ENCODE measurements at regions of chr4 and their contacts with region 1.

Region 1: DNA sequence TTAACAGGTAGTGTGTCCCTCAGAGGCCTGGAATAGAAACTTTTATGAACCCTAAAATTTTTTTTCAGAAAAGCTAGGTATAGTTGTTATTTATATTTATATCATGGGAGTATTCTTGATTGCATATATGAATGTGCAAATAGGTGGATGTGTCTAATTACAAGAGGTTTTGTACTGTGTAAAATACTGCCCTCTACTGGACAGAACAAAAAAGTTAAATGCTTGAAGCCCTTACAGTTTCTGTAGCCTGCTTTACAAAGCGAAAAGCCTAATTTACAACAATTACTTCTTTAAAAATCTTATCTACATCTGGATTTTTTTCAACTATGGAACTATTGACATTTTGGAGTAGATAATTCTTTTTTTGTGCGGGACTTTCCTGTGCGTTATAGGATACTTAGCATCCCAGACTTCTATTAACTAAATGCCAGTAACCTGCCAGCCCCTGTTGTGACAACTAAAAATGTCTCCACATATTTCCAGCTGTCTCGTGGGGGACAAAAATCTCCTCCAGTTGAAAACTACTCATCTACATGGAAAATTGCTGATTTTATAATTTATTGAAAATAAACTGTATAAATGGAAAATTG is 35.1 kb downstream of the ENPEP start:
- DNase-seq: no peak
- H3K4me3 ChIP-seq: no peak overlapping the region
- H3K27ac ChIP-seq: no peak overlapping the region
- H3K4me1 ChIP-seq: no peaks in the 10 kb centered on the region
- H3K27me3 ChIP-seq: no peaks in the 10 kb centered on the region
- CTCF ChIP-seq: peak; percentile 46 to 76 (median 69)
- POLR2A ChIP-seq: no peak

Region 2: DNA sequence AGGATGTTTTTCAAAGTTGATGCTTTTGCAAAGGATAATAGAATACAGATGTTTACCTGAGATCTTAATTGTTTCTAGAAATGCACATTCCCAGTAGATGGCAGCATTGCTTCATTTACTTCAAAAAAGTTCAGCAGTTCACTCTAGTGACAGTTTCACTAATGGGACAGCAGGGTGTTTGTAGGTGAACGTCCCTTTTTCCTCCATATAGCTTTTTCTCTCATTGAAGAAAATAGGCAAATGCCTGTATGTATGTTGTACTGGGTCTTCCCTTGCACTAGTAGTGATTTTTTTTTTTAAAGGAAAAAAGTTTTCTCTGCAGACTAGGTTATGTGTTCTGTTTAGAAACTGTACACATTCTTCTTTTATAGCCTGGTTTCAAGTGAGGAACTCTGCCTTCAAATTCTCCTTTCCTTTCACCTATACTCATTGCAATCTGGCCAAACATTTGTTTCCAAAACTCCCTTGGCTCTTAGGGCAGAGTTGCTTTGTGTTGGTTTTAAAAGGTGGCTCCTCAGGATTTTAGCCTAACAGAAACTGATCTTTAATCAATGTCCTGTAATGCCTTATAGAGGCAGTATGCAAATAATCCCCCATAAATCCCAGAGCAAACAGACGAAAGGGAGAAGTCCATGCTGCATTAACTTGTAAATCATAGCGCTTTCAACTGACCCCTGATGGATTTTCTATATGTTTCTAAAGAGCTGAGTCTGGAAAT is 512.0 kb before region 1 on chr4:
- intact Hi-C with region 1: loop called (anchors 2 kb)
- DNase-seq: peak; percentile 60
- H3K4me3 ChIP-seq: no peak overlapping the region
- H3K27ac ChIP-seq: peak overlapping the region; percentile 12 to 36
- H3K4me1 ChIP-seq: peaks cover 5% of the 10 kb centered on the region
- H3K27me3 ChIP-seq: no peaks in the 10 kb centered on the region
- CTCF ChIP-seq: peak; percentile 29 to 78 (median 76)
- POLR2A ChIP-seq: no peak

Region 3: GRCh38 chr4:110310795-110311194 is 200.3 kb before region 1 on chr4:
- intact Hi-C with region 1: loop called (anchors 5 kb)
- DNase-seq: no peak
- H3K4me3 ChIP-seq: no peak overlapping the region
- H3K27ac ChIP-seq: no peak overlapping the region
- H3K4me1 ChIP-seq: no peaks in the 10 kb centered on the region
- H3K27me3 ChIP-seq: no peaks in the 10 kb centered on the region
- CTCF ChIP-seq: no peak
- POLR2A ChIP-seq: no peak

Region 4: GRCh38 chr4:110586131-110586850 is 75.2 kb after region 1 on chr4:
- intact Hi-C with region 1: no loop called
- DNase-seq: no peak
- H3K4me3 ChIP-seq: no peak overlapping the region
- H3K27ac ChIP-seq: no peak overlapping the region
- H3K4me1 ChIP-seq: peaks cover 2% of the 10 kb centered on the region
- H3K27me3 ChIP-seq: no peaks in the 10 kb centered on the region
- CTCF ChIP-seq: peak in 1 of 4 experiments; percentile 17
- POLR2A ChIP-seq: no peak

Measured in prostate gland (tissue), 2 donors.